Naive thymus-derived CD4-positive, alpha-beta T cell (primary cell): ENCODE measurements at regions of chr16 and their contacts with region 1.

Region 1: GRCh38 chr16:89246903-89247733 is 29.6 kb downstream of the ZNF778 start:
- DNase-seq: peak; percentile 85 to 99 (median 93)
- ATAC-seq: peak; percentile 99
- H3K4me3 ChIP-seq: peak overlapping the region; percentile 17
- H3K4me3 Mint-ChIP-seq: peak overlapping the region; percentile 70 to 92 (median 78)
- H3K27ac ChIP-seq: peak overlapping the region; percentile 62
- H3K27ac Mint-ChIP-seq: peak overlapping the region in 5 of 9 donors; percentile 40 to 89 (median 76)
- H3K4me1 ChIP-seq: peaks cover 0 to 5% of the 10 kb centered on the region in 2 donors
- H3K4me1 Mint-ChIP-seq: peaks cover 3 to 31% (median 21%) of the 10 kb centered on the region in 7 donors
- H3K27me3 ChIP-seq: no peaks in the 10 kb centered on the region
- H3K27me3 Mint-ChIP-seq: peaks cover 0 to 6% (median 0%) of the 10 kb centered on the region in 5 donors

Region 2: GRCh38 chr16:89193021-89193575 is 54.0 kb before region 1 on chr16:
- CTCF ChIA-PET with region 1: interaction called, 5 read pairs
- POLR2A ChIA-PET with region 1: no interaction called
- intact Hi-C with region 1: loop called in 1 of 2 experiments (anchors 2 kb)
- DNase-seq: peak in 6 of 9 donors; percentile 45 to 61 (median 52)
- ATAC-seq: no peak
- H3K4me3 ChIP-seq: no peak overlapping the region
- H3K4me3 Mint-ChIP-seq: peak overlapping the region in 3 of 10 donors; percentile 6 to 47 (median 25)
- H3K27ac ChIP-seq: no peak overlapping the region
- H3K27ac Mint-ChIP-seq: no peak overlapping the region
- H3K4me1 ChIP-seq: no peaks in the 10 kb centered on the region
- H3K4me1 Mint-ChIP-seq: peaks cover 0 to 5% (median 0%) of the 10 kb centered on the region in 7 donors
- H3K27me3 ChIP-seq: no peaks in the 10 kb centered on the region
- H3K27me3 Mint-ChIP-seq: peaks cover 0 to 8% (median 2%) of the 10 kb centered on the region in 5 donors

Region 3: GRCh38 chr16:89300311-89300975 is 53.3 kb after region 1 on chr16:
- CTCF ChIA-PET with region 1: no interaction called
- POLR2A ChIA-PET with region 1: no interaction called
- intact Hi-C with region 1: no loop called
- DNase-seq: no peak
- ATAC-seq: no peak
- H3K4me3 ChIP-seq: no peak overlapping the region
- H3K4me3 Mint-ChIP-seq: no peak overlapping the region
- H3K27ac ChIP-seq: no peak overlapping the region
- H3K27ac Mint-ChIP-seq: peak overlapping the region in 1 of 9 donors; percentile 51
- H3K4me1 ChIP-seq: peaks cover 10 to 17% of the 10 kb centered on the region in 2 donors
- H3K4me1 Mint-ChIP-seq: peaks cover 39 to 66% (median 59%) of the 10 kb centered on the region in 7 donors
- H3K27me3 ChIP-seq: no peaks in the 10 kb centered on the region
- H3K27me3 Mint-ChIP-seq: no peaks in the 10 kb centered on the region

Region 4: GRCh38 chr16:89657442-89658220 is 410.5 kb after region 1 on chr16 and contains the starts of genes CHMP1A and SPATA33:
- CTCF ChIA-PET with region 1: no interaction called
- POLR2A ChIA-PET with region 1: no interaction called
- intact Hi-C with region 1: loop called in 1 of 2 experiments (anchors 5 kb)
- DNase-seq: peak; percentile 87 to 98 (median 94)
- ATAC-seq: peak; percentile 95
- H3K4me3 ChIP-seq: peak within 1 kb of the TSS; percentile 88
- H3K4me3 Mint-ChIP-seq: peak within 1 kb of the TSS; percentile 82 to 93 (median 86)
- H3K27ac ChIP-seq: peak within 1 kb of the TSS; percentile 85
- H3K27ac Mint-ChIP-seq: peak within 1 kb of the TSS; percentile 71 to 89 (median 85)
- H3K4me1 ChIP-seq: peaks cover 6 to 16% of the 10 kb centered on the region in 2 donors
- H3K4me1 Mint-ChIP-seq: peaks cover 17 to 44% (median 36%) of the 10 kb centered on the region in 7 donors
- H3K27me3 ChIP-seq: no peaks in the 10 kb centered on the region
- H3K27me3 Mint-ChIP-seq: no peaks in the 10 kb centered on the region
- total RNA-seq, gene CHMP1A: 64.4 to 99.0 (median 65.9) TPM
- total RNA-seq, gene SPATA33: 6.4 to 17.0 (median 7.9) TPM